Activated B cell treated with CpG ODN at 0.5 μM for 24 hours (primary cell): ENCODE measurements at regions of chr17 and their contacts with region 1.

Region 1: GRCh38 chr17:31931756-31932155 is 5.1 kb upstream of the SUZ12 start:
- DNase-seq: no peak
- ATAC-seq: no peak
- H3K4me3 Mint-ChIP-seq: no peak overlapping the region
- H3K27ac Mint-ChIP-seq: no peak overlapping the region
- H3K4me1 Mint-ChIP-seq: no peaks in the 10 kb centered on the region
- H3K27me3 Mint-ChIP-seq: no peaks in the 10 kb centered on the region
- CTCF ChIP-seq: no peak

Region 2: DNA sequence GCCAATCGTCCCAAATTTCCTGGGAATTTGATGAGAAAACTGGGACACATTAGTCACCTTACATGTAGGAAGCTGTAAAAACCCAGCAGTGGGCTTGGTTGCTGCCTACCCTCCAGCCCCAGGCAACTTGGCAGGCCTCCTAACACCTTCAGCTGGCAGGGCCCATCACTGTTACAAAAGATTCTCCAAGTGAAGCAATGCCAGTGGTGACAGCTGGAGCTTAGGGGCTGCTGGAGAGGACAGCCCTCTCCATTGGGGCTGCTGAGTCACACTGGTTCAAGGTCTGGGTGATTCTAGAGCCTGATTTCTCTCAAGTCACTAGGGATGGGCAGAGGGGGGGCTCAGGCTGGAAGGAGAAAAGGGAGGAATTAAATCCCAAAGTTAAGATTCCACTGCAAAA is 253.3 kb before region 1 on chr17:
- CTCF ChIA-PET with region 1: no interaction called
- POLR2A ChIA-PET with region 1: no interaction called
- intact Hi-C with region 1: no loop called
- DNase-seq: no peak
- ATAC-seq: no peak
- H3K4me3 Mint-ChIP-seq: no peak overlapping the region
- H3K27ac Mint-ChIP-seq: no peak overlapping the region
- H3K4me1 Mint-ChIP-seq: no peaks in the 10 kb centered on the region
- H3K27me3 Mint-ChIP-seq: peaks cover 30% of the 10 kb centered on the region
- CTCF ChIP-seq: no peak

Region 3: DNA sequence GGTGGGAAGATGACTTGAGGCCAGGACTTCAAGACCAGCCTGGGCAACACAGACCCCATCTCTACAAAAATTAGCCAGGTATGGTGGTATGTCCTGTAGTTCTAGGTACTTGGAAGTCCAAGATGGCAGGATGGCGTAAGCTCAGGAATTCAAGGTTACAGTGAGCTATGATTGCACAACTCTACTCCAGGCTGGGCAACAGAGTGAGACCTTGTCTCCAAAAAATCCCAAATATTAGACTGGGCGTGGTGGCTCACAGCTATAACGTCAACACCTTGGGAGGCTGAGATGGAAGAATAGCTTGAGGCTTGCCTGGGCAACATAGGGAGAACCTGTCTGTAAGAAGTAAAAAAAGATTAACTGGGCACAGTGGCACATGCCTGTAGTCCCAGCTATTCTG is 35.9 kb after region 1 on chr17:
- CTCF ChIA-PET with region 1: no interaction called
- POLR2A ChIA-PET with region 1: no interaction called
- intact Hi-C with region 1: no loop called
- DNase-seq: no peak
- ATAC-seq: no peak
- H3K4me3 Mint-ChIP-seq: no peak overlapping the region
- H3K27ac Mint-ChIP-seq: no peak overlapping the region
- H3K4me1 Mint-ChIP-seq: no peaks in the 10 kb centered on the region
- H3K27me3 Mint-ChIP-seq: no peaks in the 10 kb centered on the region
- CTCF ChIP-seq: no peak

Region 4: GRCh38 chr17:32006957-32007462 is 75.3 kb after region 1 on chr17 and contains the start of gene LRRC37B:
- CTCF ChIA-PET with region 1: no interaction called
- POLR2A ChIA-PET with region 1: no interaction called
- intact Hi-C with region 1: loop called (anchors 5 kb)
- DNase-seq: peak; percentile 92
- ATAC-seq: peak; percentile 94
- H3K4me3 Mint-ChIP-seq: peak within 1 kb of the TSS; percentile 84
- H3K27ac Mint-ChIP-seq: peak within 1 kb of the TSS; percentile 67
- H3K4me1 Mint-ChIP-seq: peaks cover 34% of the 10 kb centered on the region
- H3K27me3 Mint-ChIP-seq: no peaks in the 10 kb centered on the region
- CTCF ChIP-seq: peak; percentile 45
- total RNA-seq, gene LRRC37B: 13.8 and 19.5 TPM in 2 replicates